ENCODE measurements at regions of chr9 and their contacts with region 1.

Region 1: GRCh38 chr9:35732122-35732799 is at the starts of genes CREB3 and TLN1:
- DNase-seq: peak; percentile 98
- ATAC-seq: peak; percentile 86
- H3K4me3 Mint-ChIP-seq: no peak within 1 kb of the TSS
- H3K27ac Mint-ChIP-seq: peak within 1 kb of the TSS; percentile 96
- H3K4me1 Mint-ChIP-seq: peaks cover 23% of the 10 kb centered on the region
- H3K27me3 Mint-ChIP-seq: no peaks in the 10 kb centered on the region
- CTCF ChIP-seq: no peak
- total RNA-seq, gene CREB3: 22.3 to 22.4 TPM
- total RNA-seq, gene TLN1: 212 to 219 TPM

Region 2: DNA sequence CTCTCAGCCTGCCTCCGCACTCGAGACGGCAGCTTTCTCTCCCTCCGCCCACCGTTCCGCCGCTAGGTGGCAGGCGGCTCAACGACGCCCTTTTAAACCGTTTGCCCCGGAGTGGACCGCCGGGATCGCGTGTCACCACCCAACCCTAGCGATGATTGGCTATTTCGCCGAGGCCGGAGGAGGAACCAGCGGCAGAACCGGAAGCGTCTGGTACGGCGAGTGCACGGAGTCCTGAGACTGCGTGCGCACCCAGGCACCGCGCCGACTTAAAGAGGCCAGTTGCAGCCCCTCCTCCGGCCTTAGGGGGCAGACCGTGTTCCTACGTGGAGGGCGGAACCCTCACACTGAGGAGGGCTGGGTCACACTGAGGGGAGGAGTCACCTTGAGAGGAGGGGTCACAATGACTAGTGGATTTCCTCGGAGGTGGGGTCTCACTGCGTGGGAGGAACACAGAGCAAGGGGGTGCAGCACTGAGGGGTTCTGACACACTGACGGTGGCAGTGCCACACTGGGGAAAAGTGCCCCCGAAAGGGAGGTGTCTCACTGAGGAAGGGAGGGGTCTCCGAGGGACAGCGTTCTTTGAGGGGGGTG is 128.2 kb before region 1 on chr9:
- CTCF ChIA-PET with region 1: interaction called, 12 read pairs
- POLR2A ChIA-PET with region 1: interaction called, 3 read pairs
- intact Hi-C with region 1: loop called (anchors 5 kb)
- DNase-seq: peak; percentile 100
- ATAC-seq: peak; percentile 95
- H3K4me3 Mint-ChIP-seq: peak overlapping the region; percentile 87
- H3K27ac Mint-ChIP-seq: peak overlapping the region; percentile 95
- H3K4me1 Mint-ChIP-seq: peaks cover 28% of the 10 kb centered on the region
- H3K27me3 Mint-ChIP-seq: no peaks in the 10 kb centered on the region
- CTCF ChIP-seq: peak; percentile 95

Region 3: DNA sequence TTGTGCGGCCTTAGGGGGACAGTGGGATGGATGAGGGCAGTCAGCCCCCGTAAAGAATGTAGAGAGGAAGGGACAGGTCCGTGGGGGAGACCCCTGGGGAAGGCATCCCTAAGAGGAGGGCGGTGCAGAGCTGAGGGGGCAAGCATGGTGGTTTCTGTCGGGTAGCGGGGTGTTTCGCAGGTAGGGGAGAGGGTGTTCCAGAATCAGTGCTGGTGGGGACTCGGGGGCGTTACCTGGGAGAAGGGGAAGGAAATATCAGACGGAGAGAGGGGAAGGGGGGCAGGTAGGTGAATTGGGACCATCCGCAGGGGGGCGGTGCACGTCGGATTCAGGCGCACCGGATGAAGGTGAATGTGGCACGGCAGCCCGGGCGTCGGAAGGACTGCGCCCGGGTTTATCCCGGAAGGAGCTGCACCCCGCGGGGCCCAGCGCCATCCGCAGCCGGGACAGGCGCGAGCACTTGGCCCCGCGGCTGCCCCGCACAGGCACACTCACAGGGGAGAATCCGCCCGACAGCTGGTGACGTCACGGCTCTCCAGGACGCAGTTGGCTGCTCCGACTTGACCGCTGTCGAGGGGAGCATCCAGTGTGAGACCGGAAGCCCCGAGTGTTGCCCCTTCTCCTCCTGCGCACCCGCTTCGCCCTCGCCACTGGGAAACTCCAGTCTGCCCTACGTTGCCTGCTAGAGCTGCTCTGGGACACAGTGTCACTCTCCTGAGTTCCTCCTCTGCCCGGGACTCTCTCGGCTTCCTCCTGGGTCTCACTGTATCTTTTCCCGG is 115.4 kb before region 1 on chr9:
- CTCF ChIA-PET with region 1: interaction called, 26 read pairs
- POLR2A ChIA-PET with region 1: interaction called, 4 read pairs
- intact Hi-C with region 1: no loop called
- DNase-seq: peak; percentile 88
- ATAC-seq: peak; percentile 45
- H3K4me3 Mint-ChIP-seq: peak overlapping the region; percentile 86
- H3K27ac Mint-ChIP-seq: peak overlapping the region; percentile 96
- H3K4me1 Mint-ChIP-seq: peaks cover 49% of the 10 kb centered on the region
- H3K27me3 Mint-ChIP-seq: no peaks in the 10 kb centered on the region
- CTCF ChIP-seq: peak; percentile 39

Region 4: DNA sequence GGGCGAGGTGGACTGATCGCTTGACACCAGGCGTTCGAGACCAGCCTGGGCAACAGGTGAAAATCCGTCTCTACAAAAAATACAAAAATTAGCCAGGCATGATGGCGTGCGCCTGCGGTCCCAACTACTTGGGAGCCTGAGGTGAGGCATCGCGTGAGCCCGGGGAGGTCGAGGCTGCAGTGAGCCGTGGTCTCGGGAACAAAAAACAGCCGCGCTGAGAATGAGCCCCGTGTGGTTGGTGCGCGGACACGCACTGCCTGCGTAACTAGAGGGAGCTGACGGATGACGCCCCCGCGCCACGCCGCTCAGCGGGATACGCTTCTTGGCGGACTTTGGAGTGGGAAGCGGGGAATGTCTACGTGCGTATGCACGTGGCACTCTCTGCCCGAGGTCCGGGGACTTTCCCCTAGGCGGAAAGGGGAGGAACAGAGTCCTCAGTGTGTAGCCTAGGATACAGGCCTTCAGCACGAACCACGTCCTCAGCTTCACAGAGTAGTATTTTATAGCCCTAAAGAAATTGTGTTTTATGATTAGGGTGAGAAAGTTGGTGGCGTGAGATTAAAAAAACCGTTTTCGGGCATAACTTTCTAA is 74.6 kb before region 1 on chr9 and contains the start of gene RMRP:
- CTCF ChIA-PET with region 1: interaction called, 29 read pairs
- POLR2A ChIA-PET with region 1: interaction called, 17 read pairs
- intact Hi-C with region 1: loop called (anchors 5 kb)
- DNase-seq: peak; percentile 97
- ATAC-seq: peak; percentile 95
- H3K4me3 Mint-ChIP-seq: peak within 1 kb of the TSS; percentile 81
- H3K27ac Mint-ChIP-seq: peak within 1 kb of the TSS; percentile 96
- H3K4me1 Mint-ChIP-seq: peaks cover 59% of the 10 kb centered on the region
- H3K27me3 Mint-ChIP-seq: peaks cover 2% of the 10 kb centered on the region
- CTCF ChIP-seq: no peak
- total RNA-seq, gene RMRP: 13,164 to 13,311 TPM

Region 5: GRCh38 chr9:35696525-35697215 is 35.6 kb before region 1 on chr9:
- CTCF ChIA-PET with region 1: interaction called, 170 read pairs
- POLR2A ChIA-PET with region 1: interaction called, 7 read pairs
- intact Hi-C with region 1: no loop called
- DNase-seq: peak; percentile 75
- ATAC-seq: peak; percentile 98
- H3K4me3 Mint-ChIP-seq: no peak overlapping the region
- H3K27ac Mint-ChIP-seq: no peak overlapping the region
- H3K4me1 Mint-ChIP-seq: no peaks in the 10 kb centered on the region
- H3K27me3 Mint-ChIP-seq: no peaks in the 10 kb centered on the region
- CTCF ChIP-seq: peak; percentile 95

Region 6: GRCh38 chr9:35756275-35757225 is 24.3 kb after region 1 on chr9:
- CTCF ChIA-PET with region 1: interaction called, 25 read pairs
- POLR2A ChIA-PET with region 1: interaction called, 5 read pairs
- intact Hi-C with region 1: no loop called
- DNase-seq: peak; percentile 88
- ATAC-seq: peak; percentile 95
- H3K4me3 Mint-ChIP-seq: peak overlapping the region; percentile 95
- H3K27ac Mint-ChIP-seq: peak overlapping the region; percentile 96
- H3K4me1 Mint-ChIP-seq: peaks cover 38% of the 10 kb centered on the region
- H3K27me3 Mint-ChIP-seq: no peaks in the 10 kb centered on the region
- CTCF ChIP-seq: peak; percentile 85

Measured in activated CD8-positive, alpha-beta T cell treated with anti-CD3 and anti-CD28 coated beads for 36 hours (primary cell).